Naive thymus-derived CD4-positive, alpha-beta T cell (primary cell): ENCODE measurements at regions of chr14 and their contacts with region 1.

Region 1: DNA sequence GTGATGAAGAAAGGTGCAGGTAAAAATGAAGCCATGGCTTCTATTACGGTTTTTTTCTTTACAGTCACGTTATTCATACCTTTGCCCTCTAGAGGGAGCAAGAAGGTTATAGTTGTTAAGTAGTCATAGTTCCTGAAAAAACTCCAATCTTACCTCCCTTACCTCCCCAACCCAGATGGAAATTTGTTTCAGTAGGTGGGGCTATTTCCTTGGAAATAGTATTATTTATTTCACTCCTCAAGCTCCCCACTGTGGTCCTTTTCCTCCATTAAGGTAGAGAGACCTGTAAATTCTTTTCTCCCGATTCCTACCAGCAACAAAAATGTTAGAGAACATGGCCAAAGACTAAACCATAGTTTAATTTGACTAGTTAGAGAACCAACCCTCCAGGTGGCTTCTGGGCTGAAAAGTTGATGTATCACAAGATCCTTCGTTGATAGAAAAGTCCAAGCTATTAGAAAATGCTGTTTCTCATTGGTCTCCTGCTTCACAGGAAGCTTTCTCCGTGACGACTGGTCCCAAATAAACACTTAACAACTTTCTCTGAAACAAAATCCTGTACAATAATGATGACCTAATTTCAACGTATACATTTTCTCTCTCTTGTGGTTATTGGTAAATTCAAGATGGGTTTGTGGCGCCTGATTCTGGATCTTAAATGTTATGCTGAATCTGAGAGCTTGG is 43.5 kb downstream of the TMX1 start:
- DNase-seq: peak in 5 of 9 donors; percentile 25 to 47 (median 32)
- ATAC-seq: peak; percentile 73
- H3K4me3 ChIP-seq: no peak overlapping the region
- H3K4me3 Mint-ChIP-seq: no peak overlapping the region
- H3K27ac ChIP-seq: no peak overlapping the region
- H3K27ac Mint-ChIP-seq: no peak overlapping the region
- H3K4me1 ChIP-seq: no peaks in the 10 kb centered on the region
- H3K4me1 Mint-ChIP-seq: peaks cover 0 to 2% (median 0%) of the 10 kb centered on the region in 7 donors
- H3K27me3 ChIP-seq: no peaks in the 10 kb centered on the region
- H3K27me3 Mint-ChIP-seq: no peaks in the 10 kb centered on the region

Region 2: DNA sequence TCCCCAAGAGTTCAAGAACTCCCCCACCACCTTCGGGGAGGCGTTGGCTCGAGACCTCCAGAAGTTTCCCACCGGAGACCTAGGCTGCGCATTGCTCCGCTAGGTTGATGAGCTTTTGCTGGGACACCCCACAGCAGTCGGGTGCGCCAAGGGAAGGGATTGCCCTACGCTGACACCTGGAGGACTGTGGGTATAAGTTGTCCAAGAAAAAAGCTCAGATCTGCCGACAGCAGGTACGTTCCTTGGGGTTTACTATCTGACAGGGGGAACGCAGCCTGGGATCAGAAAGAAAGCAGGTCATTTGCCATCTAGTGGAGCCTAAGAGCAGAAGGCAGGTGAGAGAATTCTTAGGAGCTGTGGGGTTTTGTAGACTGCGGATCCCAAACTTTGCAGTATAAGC is 467.0 kb after region 1 on chr14:
- CTCF ChIA-PET with region 1: no interaction called
- POLR2A ChIA-PET with region 1: no interaction called
- intact Hi-C with region 1: loop called in 1 of 2 experiments (anchors 1 kb)
- DNase-seq: no peak
- ATAC-seq: no peak
- H3K4me3 ChIP-seq: no peak overlapping the region
- H3K4me3 Mint-ChIP-seq: no peak overlapping the region
- H3K27ac ChIP-seq: no peak overlapping the region
- H3K27ac Mint-ChIP-seq: no peak overlapping the region
- H3K4me1 ChIP-seq: no peaks in the 10 kb centered on the region
- H3K4me1 Mint-ChIP-seq: no peaks in the 10 kb centered on the region
- H3K27me3 ChIP-seq: no peaks in the 10 kb centered on the region
- H3K27me3 Mint-ChIP-seq: peaks cover 0 to 18% (median 6%) of the 10 kb centered on the region in 5 donors

Region 3: GRCh38 chr14:52131640-52132320 is 848.2 kb after region 1 on chr14:
- CTCF ChIA-PET with region 1: no interaction called
- POLR2A ChIA-PET with region 1: no interaction called
- intact Hi-C with region 1: loop called in 1 of 2 experiments (anchors 5 kb)
- DNase-seq: peak in 2 of 9 donors; percentile 6 to 10
- ATAC-seq: no peak
- H3K4me3 ChIP-seq: no peak overlapping the region
- H3K4me3 Mint-ChIP-seq: no peak overlapping the region
- H3K27ac ChIP-seq: no peak overlapping the region
- H3K27ac Mint-ChIP-seq: no peak overlapping the region
- H3K4me1 ChIP-seq: peaks cover 0 to 6% of the 10 kb centered on the region in 2 donors
- H3K4me1 Mint-ChIP-seq: peaks cover 0 to 13% (median 5%) of the 10 kb centered on the region in 7 donors
- H3K27me3 ChIP-seq: no peaks in the 10 kb centered on the region
- H3K27me3 Mint-ChIP-seq: peaks cover 5 to 35% (median 10%) of the 10 kb centered on the region in 5 donors